Mammary epithelial cell (primary cell): ENCODE measurements at regions of chr6 and their contacts with region 1.

Region 1: DNA sequence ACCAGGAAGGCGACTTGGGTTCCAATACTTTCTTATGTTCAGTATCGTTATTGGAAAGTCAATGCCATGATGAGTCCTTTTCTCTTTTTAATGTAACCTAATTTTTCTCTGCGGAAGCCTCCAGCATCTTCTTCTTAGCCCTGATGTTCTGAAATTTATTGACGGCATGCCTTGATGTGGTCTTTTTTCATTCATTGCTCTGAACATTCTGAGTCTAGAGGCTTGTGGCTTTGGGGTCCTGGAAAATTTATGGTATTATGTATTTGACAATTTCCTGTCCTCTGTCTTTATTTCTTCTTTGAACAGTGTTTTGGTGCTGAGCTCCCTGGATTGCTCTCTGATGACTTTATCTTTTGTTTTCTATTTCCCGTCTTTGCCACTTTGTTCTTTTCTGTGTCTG is 28.7 kb upstream of the MAS1 start:
- DNase-seq: no peak
- H3K4me3 ChIP-seq: no peak overlapping the region
- H3K27ac ChIP-seq: no peak overlapping the region
- H3K4me1 ChIP-seq: no peaks in the 10 kb centered on the region
- H3K27me3 ChIP-seq: no peaks in the 10 kb centered on the region
- CTCF ChIP-seq: no peak

Region 2: DNA sequence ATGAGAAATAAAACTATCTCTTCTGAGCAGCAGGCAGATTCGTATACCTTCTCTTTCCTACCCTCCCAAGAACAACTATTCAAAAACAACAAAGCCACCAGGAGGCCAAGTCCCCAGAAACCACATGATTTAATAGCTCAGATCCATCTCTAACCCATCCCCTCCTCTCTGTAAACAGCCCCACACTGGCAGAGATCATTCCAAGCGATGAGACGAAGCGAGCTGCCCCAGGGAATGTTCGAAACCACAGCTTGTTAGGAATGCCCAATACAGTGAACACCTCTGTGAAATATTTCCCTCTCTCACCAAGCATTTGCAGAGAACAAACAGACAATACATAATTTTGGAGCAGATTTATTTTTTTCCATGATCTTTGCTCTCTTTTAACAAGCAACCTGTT is 400.8 kb before region 1 on chr6:
- CTCF ChIA-PET with region 1: no interaction called
- dilution Hi-C with region 1: no loop called
- in situ Hi-C with region 1: no loop called
- intact Hi-C with region 1: no loop called
- DNase-seq: peak; percentile 6
- H3K4me3 ChIP-seq: no peak overlapping the region
- H3K27ac ChIP-seq: no peak overlapping the region
- H3K4me1 ChIP-seq: no peaks in the 10 kb centered on the region
- H3K27me3 ChIP-seq: peaks cover 2% of the 10 kb centered on the region
- CTCF ChIP-seq: no peak

Region 3: DNA sequence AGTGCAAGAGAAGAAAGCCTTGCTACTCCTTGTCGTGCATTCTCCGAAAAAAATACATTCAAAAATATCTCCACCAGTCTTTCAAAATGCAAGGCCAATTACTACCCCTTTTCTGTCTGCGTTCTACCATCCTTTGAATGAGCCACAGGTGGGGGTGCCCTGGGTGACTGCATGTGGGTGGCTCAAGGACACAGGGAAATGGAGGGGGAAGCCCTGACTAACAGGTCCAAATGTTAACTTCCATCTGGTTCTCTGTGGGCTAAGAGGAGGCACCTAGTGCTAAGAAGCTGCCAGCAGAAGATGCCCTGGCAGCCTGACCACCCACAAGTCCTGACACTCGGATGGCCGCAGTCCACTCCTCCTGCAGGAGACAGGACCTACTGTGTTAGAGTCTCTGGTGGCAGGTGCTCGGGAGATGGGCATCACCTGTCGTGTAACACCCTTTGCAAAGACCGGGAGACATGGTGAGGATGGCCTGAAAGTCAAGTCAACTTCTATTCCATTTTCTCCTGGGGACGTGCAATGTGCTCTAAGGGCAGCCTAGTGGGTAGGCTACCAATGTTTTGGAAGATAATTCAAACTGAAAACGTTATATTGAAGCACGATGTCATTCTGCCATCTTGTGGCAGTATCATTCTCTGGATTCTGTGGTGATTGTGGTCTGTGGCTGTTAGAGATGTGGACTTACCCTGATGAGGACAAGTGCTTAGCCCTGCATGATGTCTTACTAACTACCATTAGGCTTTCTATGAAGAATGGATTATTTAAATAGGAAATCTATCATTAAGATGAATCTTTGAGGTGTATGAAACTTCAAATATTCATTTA is 79.4 kb after region 1 on chr6:
- CTCF ChIA-PET with region 1: no interaction called
- dilution Hi-C with region 1: no loop called
- in situ Hi-C with region 1: loop called in 1 of 2 experiments (anchors 5 kb)
- intact Hi-C with region 1: loop called (anchors 1 kb)
- DNase-seq: peak; percentile 51
- H3K4me3 ChIP-seq: no peak overlapping the region
- H3K27ac ChIP-seq: no peak overlapping the region
- H3K4me1 ChIP-seq: no peaks in the 10 kb centered on the region
- H3K27me3 ChIP-seq: no peaks in the 10 kb centered on the region
- CTCF ChIP-seq: peak; percentile 35 to 66

Region 4: DNA sequence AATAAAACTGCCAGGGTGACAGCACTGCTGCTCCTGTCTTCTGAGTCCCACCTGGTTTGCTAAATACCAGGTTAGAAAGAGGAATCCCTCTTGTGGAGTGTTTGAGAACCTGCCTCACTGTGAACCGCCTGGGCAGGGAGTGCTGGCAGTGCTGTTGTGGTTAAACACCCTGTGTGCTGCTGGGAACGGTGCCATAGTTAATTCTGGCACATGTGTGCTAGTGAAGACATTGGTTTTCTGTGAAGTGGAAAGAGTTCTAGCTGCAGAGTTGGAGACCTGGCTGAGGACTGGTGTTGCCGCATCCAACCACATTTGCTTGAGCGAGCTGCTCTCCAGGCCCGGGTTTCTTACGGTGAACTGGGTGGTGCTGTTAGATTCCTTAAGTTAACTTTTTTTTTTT is 179.5 kb after region 1 on chr6:
- CTCF ChIA-PET with region 1: interaction called, 6 read pairs
- dilution Hi-C with region 1: no loop called
- in situ Hi-C with region 1: no loop called
- intact Hi-C with region 1: loop called (anchors 1 kb)
- DNase-seq: peak; percentile 82
- H3K4me3 ChIP-seq: no peak overlapping the region
- H3K27ac ChIP-seq: peak overlapping the region; percentile 65
- H3K4me1 ChIP-seq: peaks cover 44% of the 10 kb centered on the region
- H3K27me3 ChIP-seq: no peaks in the 10 kb centered on the region
- CTCF ChIP-seq: peak; percentile 42 to 56

Region 5: DNA sequence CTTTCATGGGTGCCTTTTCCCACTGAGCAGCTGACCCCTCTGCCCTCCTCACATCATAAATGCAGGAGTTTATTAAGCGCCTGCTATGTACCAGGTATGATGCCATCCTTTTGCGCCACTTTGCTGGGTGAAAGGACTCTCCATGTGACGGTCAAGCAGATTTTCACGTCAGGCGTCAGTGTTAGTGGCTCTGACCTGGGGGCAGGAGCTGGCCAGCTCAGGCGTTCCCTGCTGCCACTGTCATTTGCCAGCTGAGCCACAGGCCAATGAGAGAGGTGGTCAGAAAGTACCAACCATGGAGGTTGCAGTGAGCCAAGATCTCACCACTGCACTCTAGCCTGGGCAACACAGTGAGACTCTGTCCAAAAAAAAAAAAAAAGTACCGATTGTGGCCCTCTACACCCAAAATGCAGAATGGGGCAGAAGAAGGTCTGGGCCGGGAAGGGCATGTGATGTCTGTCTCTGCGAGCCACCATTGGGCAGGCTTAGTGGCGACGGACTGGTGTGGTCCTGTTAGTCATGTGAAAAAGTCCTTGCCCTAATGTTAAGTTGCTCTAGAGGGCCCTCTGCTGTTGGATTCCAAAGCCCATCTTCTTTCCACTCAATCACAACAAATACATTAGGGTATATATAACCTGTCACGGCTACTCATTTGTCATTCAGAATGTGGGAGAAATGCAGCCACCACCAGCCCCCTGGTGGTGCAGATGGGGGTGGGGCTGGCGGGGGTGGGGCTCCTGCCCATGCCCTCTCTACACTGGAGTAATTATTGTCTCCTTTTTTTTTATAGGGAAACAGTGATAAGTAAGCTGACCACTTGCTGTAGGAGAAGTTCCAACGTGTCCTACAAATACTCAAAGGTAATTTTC is 241.1 kb after region 1 on chr6:
- CTCF ChIA-PET with region 1: no interaction called
- dilution Hi-C with region 1: no loop called
- in situ Hi-C with region 1: no loop called
- intact Hi-C with region 1: loop called (anchors 2 kb)
- DNase-seq: no peak
- H3K4me3 ChIP-seq: no peak overlapping the region
- H3K27ac ChIP-seq: no peak overlapping the region
- H3K4me1 ChIP-seq: no peaks in the 10 kb centered on the region
- H3K27me3 ChIP-seq: no peaks in the 10 kb centered on the region
- CTCF ChIP-seq: peak; percentile 36 to 44

Region 6: GRCh38 chr6:160455541-160456213 is 593.6 kb after region 1 on chr6:
- CTCF ChIA-PET with region 1: no interaction called
- dilution Hi-C with region 1: no loop called
- in situ Hi-C with region 1: no loop called
- intact Hi-C with region 1: loop called (anchors 1 kb)
- DNase-seq: peak; percentile 28
- H3K4me3 ChIP-seq: peak overlapping the region in 1 of 3 experiments; percentile 20
- H3K27ac ChIP-seq: no peak overlapping the region
- H3K4me1 ChIP-seq: peaks cover 4% of the 10 kb centered on the region
- H3K27me3 ChIP-seq: no peaks in the 10 kb centered on the region
- CTCF ChIP-seq: peak; percentile 83 to 95

Region 7: GRCh38 chr6:160534050-160534696 is 672.1 kb after region 1 on chr6:
- CTCF ChIA-PET with region 1: no interaction called
- dilution Hi-C with region 1: no loop called
- in situ Hi-C with region 1: no loop called
- intact Hi-C with region 1: loop called (anchors 5 kb)
- DNase-seq: peak; percentile 25
- H3K4me3 ChIP-seq: no peak overlapping the region
- H3K27ac ChIP-seq: no peak overlapping the region
- H3K4me1 ChIP-seq: no peaks in the 10 kb centered on the region
- H3K27me3 ChIP-seq: no peaks in the 10 kb centered on the region
- CTCF ChIP-seq: peak; percentile 92 to 93

Region 8: GRCh38 chr6:160667639-160668481 is 805.8 kb after region 1 on chr6:
- CTCF ChIA-PET with region 1: no interaction called
- dilution Hi-C with region 1: no loop called
- in situ Hi-C with region 1: no loop called
- intact Hi-C with region 1: loop called (anchors 10 kb)
- DNase-seq: peak; percentile 12
- H3K4me3 ChIP-seq: no peak overlapping the region
- H3K27ac ChIP-seq: no peak overlapping the region
- H3K4me1 ChIP-seq: no peaks in the 10 kb centered on the region
- H3K27me3 ChIP-seq: no peaks in the 10 kb centered on the region
- CTCF ChIP-seq: peak; percentile 77